T-cell (primary cell): ENCODE measurements at regions of chr5 and their contacts with region 1.

Region 1: DNA sequence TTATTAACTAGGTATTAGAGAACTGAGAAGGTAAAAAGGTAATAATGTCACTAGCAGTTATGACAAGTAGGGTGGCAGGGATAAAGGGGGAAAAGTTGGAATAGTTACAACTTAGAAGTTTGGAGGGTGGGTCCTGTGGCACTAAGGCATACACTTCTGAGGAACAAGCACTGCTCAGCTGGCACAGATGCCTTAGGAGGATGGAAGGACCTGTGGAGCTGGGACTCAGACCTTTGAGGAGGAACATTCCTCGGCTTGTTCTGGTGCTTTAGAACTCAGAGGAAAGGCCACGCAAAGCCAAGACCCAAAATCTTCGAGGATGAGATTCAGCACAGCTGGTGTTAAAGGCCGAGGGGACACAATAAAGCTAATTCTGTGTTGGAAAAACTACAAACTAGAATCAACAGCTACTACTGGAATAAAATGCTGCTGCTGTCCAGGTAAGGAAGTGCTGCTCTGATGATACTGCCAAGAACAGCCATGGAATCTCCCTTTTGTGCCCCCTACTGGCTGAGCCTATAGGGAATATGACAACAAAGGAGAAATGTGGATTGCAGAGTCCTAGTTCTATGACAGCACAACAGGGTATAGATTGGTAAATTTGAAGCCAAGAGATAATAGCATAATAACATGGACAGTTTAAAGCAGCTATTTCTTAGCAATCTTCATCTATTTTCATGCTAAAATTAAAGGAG is 126.7 kb downstream of the SLC25A46 start:
- DNase-seq: peak in 1 of 35 experiments; percentile 1
- ATAC-seq: no peak
- H3K4me3 ChIP-seq: no peak overlapping the region
- H3K4me3 Mint-ChIP-seq: no peak overlapping the region
- H3K27ac ChIP-seq: no peak overlapping the region
- H3K27ac Mint-ChIP-seq: no peak overlapping the region
- H3K4me1 ChIP-seq: no peaks in the 10 kb centered on the region
- H3K4me1 Mint-ChIP-seq: no peaks in the 10 kb centered on the region
- H3K27me3 ChIP-seq: no peaks in the 10 kb centered on the region
- H3K27me3 Mint-ChIP-seq: peaks cover 1 to 7% of the 10 kb centered on the region in 2 donors

Region 2: DNA sequence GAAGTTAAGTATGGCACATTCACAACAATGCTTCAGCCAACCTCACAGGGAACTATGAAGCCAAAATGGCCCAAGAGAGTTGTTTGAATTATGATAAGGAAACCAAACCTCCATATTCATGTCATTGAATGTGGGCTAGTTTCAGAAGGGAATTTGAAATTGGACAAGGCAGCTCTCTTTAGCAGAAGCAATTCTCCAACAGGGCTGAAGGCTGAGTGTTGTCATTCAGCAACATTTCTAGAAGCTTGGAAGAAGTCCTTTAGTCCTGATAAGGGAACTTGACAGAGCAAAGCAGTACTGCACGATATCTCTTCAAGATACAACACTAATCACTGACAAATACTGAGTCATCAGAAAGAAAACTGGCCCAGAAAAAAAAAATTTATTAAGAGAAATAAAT is 11.3 kb before region 1 on chr5:
- CTCF ChIA-PET with region 1: interaction called in 1 of 2 experiments, 4 read pairs
- POLR2A ChIA-PET with region 1: interaction called, 4 to 10 read pairs
- DNase-seq: no peak
- ATAC-seq: no peak
- H3K4me3 ChIP-seq: no peak overlapping the region
- H3K4me3 Mint-ChIP-seq: no peak overlapping the region
- H3K27ac ChIP-seq: no peak overlapping the region
- H3K27ac Mint-ChIP-seq: no peak overlapping the region
- H3K4me1 ChIP-seq: no peaks in the 10 kb centered on the region
- H3K4me1 Mint-ChIP-seq: no peaks in the 10 kb centered on the region
- H3K27me3 ChIP-seq: no peaks in the 10 kb centered on the region
- H3K27me3 Mint-ChIP-seq: peaks cover 8 to 13% of the 10 kb centered on the region in 2 donors

Region 3: GRCh38 chr5:110880413-110880812 is 14.9 kb after region 1 on chr5:
- CTCF ChIA-PET with region 1: no interaction called
- POLR2A ChIA-PET with region 1: no interaction called
- DNase-seq: no peak
- ATAC-seq: no peak
- H3K4me3 ChIP-seq: no peak overlapping the region
- H3K4me3 Mint-ChIP-seq: no peak overlapping the region
- H3K27ac ChIP-seq: no peak overlapping the region
- H3K27ac Mint-ChIP-seq: no peak overlapping the region
- H3K4me1 ChIP-seq: no peaks in the 10 kb centered on the region
- H3K4me1 Mint-ChIP-seq: no peaks in the 10 kb centered on the region
- H3K27me3 ChIP-seq: no peaks in the 10 kb centered on the region
- H3K27me3 Mint-ChIP-seq: no peaks in the 10 kb centered on the region

Region 4: DNA sequence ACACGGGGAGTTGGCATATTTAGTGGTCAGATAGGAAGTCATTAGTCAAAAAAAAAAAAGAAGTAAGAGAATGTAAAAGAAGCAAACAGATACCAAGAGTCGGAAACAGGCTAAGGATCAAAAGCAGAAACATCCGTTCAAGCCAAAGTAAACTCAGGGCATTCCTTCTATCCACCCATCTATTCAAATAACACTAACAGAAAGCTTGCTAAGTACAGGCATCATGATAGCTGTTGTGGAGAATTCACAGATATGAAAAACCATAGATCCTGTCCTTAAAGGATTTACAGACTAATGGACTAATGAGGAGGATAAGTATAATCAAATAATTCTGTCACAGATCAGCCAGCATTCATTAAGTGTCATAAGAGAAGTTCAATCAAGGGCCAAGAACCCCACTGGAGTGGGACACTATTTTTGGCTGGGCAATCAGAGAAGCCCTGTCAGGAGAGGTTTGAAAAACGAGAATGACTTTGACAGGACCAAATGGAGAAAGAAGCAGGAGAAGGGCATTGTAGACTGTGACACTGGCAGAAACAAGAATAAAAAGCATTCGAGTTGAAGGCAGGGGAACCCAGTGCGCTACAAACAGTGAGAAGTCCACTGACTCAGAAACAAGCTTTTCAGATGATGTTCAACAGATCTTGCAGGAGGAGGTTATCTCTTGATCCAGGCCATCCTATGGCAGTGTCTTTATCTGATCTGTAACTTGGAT is 51.8 kb after region 1 on chr5:
- CTCF ChIA-PET with region 1: no interaction called
- POLR2A ChIA-PET with region 1: no interaction called
- DNase-seq: no peak
- ATAC-seq: no peak
- H3K4me3 ChIP-seq: no peak overlapping the region
- H3K4me3 Mint-ChIP-seq: no peak overlapping the region
- H3K27ac ChIP-seq: no peak overlapping the region
- H3K27ac Mint-ChIP-seq: no peak overlapping the region
- H3K4me1 ChIP-seq: no peaks in the 10 kb centered on the region
- H3K4me1 Mint-ChIP-seq: no peaks in the 10 kb centered on the region
- H3K27me3 ChIP-seq: no peaks in the 10 kb centered on the region
- H3K27me3 Mint-ChIP-seq: peaks cover 4 to 13% of the 10 kb centered on the region in 2 donors